PC-9 (cell line): ENCODE measurements at regions of chr17 and their contacts with region 1.

Region 1: DNA sequence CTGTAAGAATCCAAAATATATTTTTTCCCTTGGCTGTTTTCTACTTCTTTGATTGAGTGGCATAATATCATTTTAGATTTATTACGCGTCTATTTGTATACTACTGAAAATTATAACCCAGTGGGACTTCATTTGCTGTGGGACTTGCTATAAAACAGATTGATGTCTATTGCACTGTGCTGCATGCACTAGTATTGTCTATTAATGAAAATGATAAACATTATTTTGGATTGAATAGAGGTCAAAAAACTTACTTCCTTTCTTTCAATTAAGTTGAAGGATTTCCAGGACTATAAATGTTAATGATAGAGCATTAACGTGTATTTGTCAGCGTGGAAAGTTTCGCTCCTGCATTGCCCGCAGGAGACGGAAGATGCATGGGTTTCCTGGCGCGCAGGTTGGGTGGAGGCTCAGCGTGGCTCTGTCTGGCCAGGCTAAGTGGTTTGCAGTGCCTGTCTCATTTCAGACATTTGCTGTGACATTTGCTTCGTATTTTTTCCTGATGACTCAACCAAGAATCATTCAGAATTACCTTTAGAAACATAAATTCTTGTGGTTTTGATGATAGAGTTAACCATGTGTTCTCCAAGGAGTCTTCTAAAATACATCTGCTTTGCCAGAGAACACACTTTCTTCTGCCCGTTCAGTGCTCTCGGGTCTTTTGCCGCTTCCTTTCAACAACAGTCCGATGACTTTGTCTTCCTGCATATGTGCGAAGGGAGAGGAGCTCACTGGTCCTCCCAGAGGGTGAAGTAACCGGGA is 216.7 kb downstream of the RPTOR start:
- DNase-seq: peak; percentile 59 to 86
- H3K4me3 ChIP-seq: peak overlapping the region; percentile 27; the same call in 1 of the 2 replicates
- H3K27ac ChIP-seq: peak overlapping the region; percentile 69
- H3K4me1 ChIP-seq: peaks cover 40% of the 10 kb centered on the region
- H3K27me3 ChIP-seq: no peaks in the 10 kb centered on the region
- CTCF ChIP-seq: no peak

Region 2: GRCh38 chr17:80254396-80255251 is 506.7 kb before region 1 on chr17:
- CTCF ChIA-PET with region 1: no interaction called
- POLR2A ChIA-PET with region 1: no interaction called
- intact Hi-C with region 1: no loop called
- DNase-seq: peak; percentile 83 to 96
- H3K4me3 ChIP-seq: peak overlapping the region; percentile 38; the same call in 1 of the 2 replicates
- H3K27ac ChIP-seq: peak overlapping the region; percentile 94
- H3K4me1 ChIP-seq: peaks cover 41% of the 10 kb centered on the region
- H3K27me3 ChIP-seq: no peaks in the 10 kb centered on the region
- CTCF ChIP-seq: no peak

Region 3: GRCh38 chr17:80270836-80271235 is 490.5 kb before region 1 on chr17:
- CTCF ChIA-PET with region 1: no interaction called
- POLR2A ChIA-PET with region 1: no interaction called
- intact Hi-C with region 1: no loop called
- DNase-seq: peak in 1 of 2 experiments; percentile 15
- H3K4me3 ChIP-seq: no peak overlapping the region
- H3K27ac ChIP-seq: no peak overlapping the region
- H3K4me1 ChIP-seq: no peaks in the 10 kb centered on the region
- H3K27me3 ChIP-seq: no peaks in the 10 kb centered on the region
- CTCF ChIP-seq: no peak

Region 4: DNA sequence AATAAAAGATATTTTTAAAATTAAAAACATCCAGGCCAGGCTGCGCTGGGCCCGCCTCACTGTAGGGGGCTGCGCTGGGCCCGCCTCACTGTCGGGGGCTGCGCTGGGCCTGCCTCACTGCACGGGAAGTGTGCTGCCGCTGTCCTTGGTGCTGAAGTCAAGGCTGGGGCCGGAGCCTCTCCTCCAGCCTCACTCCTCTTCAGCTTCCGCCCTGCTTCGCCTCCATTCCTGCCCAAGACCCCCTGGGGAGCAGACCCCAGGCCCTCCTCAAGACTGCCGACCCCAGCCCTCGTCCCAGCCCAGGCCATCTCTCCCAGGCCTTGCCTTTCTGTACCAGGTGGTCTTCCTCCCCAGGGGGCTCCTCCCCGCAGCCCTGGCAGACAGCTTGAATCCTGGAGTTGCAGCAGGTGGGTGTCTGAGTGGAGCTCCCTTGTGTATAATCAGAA is 320.1 kb before region 1 on chr17:
- CTCF ChIA-PET with region 1: no interaction called
- POLR2A ChIA-PET with region 1: no interaction called
- intact Hi-C with region 1: no loop called
- DNase-seq: peak in 1 of 2 experiments; percentile 35
- H3K4me3 ChIP-seq: no peak overlapping the region
- H3K27ac ChIP-seq: no peak overlapping the region
- H3K4me1 ChIP-seq: no peaks in the 10 kb centered on the region
- H3K27me3 ChIP-seq: peaks cover 6% of the 10 kb centered on the region; the same call in 1 of the 2 replicates
- CTCF ChIP-seq: no peak

Region 5: GRCh38 chr17:80619535-80620312 is 141.6 kb before region 1 on chr17:
- CTCF ChIA-PET with region 1: no interaction called
- POLR2A ChIA-PET with region 1: no interaction called
- intact Hi-C with region 1: loop called (anchors 10 kb)
- DNase-seq: peak; percentile 50 to 88
- H3K4me3 ChIP-seq: no peak overlapping the region; the same call in 1 of the 2 replicates
- H3K27ac ChIP-seq: peak overlapping the region; percentile 81
- H3K4me1 ChIP-seq: peaks cover 23% of the 10 kb centered on the region
- H3K27me3 ChIP-seq: no peaks in the 10 kb centered on the region
- CTCF ChIP-seq: no peak

Region 6: DNA sequence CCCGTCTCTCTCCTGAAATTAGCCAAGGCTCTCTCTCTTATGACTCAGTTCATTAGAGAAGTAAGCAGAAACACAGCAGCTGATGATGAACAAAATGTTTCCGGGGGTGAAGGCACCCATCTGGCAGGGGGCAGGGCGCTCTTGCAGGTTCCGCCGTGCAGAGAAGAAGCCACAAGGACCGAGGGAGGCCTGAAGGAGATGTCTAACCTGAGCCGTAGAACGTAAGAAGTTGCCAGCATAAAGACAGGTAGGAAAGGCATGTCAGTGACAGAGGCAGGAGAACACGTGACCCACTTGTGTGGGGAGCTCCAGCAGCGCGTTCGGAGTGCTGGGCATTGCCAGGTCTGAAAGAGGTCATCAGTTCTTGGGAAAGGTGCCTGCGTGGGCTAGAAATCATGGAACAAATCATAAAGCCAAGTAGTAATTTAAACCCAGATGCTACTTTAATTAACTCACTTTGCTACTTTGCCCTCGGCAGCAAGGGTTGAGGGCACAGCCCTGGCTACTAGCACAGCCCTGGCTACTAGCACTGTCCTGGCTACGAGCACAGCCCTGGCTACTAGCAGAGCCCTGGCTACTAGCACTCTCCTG is 18.0 kb before region 1 on chr17:
- CTCF ChIA-PET with region 1: no interaction called
- POLR2A ChIA-PET with region 1: no interaction called
- intact Hi-C with region 1: no loop called
- DNase-seq: no peak
- H3K4me3 ChIP-seq: no peak overlapping the region
- H3K27ac ChIP-seq: no peak overlapping the region
- H3K4me1 ChIP-seq: no peaks in the 10 kb centered on the region
- H3K27me3 ChIP-seq: no peaks in the 10 kb centered on the region
- CTCF ChIP-seq: no peak

Region 7: GRCh38 chr17:80892019-80892855 is 130.9 kb after region 1 on chr17:
- CTCF ChIA-PET with region 1: no interaction called
- POLR2A ChIA-PET with region 1: no interaction called
- intact Hi-C with region 1: loop called (anchors 1 kb)
- DNase-seq: peak; percentile 83 to 85
- H3K4me3 ChIP-seq: peak overlapping the region; percentile 44; the same call in 1 of the 2 replicates
- H3K27ac ChIP-seq: peak overlapping the region; percentile 95
- H3K4me1 ChIP-seq: peaks cover 31% of the 10 kb centered on the region
- H3K27me3 ChIP-seq: no peaks in the 10 kb centered on the region
- CTCF ChIP-seq: 0 out of 2 replicates have a peak, but pooled peaks have one; percentile 0